ENCODE measurements at regions of chr20 and their contacts with region 1.

Region 1: DNA sequence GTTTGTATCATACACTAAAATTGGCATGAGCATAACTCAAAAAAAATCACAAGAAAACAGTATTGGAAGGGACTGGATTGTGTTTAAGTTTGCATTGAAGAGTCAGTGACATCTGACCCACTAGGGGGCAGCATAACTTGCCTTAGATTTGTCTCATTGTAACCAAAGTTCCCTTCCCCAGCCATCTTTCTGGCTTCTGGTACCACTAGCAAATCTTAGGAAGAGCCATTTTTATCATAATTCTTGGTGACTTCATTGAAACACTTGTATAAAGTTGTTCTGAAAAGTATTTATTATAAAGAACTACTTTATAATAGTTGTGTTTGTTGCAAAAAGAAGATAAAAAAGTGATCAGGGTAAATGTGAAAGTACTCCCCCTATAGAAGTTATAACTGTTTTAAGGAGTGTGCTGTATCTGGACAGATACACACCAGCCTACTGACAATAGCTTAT is 7.7 kb downstream of the CSTF1 start:
- DNase-seq: peak in 8 of 9 donors; percentile 43 to 78 (median 72)
- ATAC-seq: peak; percentile 91
- H3K4me3 ChIP-seq: no peak overlapping the region
- H3K4me3 Mint-ChIP-seq: peak overlapping the region in 3 of 10 donors; percentile 28 to 35 (median 32)
- H3K27ac ChIP-seq: peak overlapping the region; percentile 31
- H3K27ac Mint-ChIP-seq: peak overlapping the region in 8 of 9 donors; percentile 32 to 78 (median 66)
- H3K4me1 ChIP-seq: peaks cover 5 to 6% of the 10 kb centered on the region in 2 donors
- H3K4me1 Mint-ChIP-seq: peaks cover 10 to 42% (median 27%) of the 10 kb centered on the region in 7 donors
- H3K27me3 ChIP-seq: no peaks in the 10 kb centered on the region
- H3K27me3 Mint-ChIP-seq: no peaks in the 10 kb centered on the region

Region 2: DNA sequence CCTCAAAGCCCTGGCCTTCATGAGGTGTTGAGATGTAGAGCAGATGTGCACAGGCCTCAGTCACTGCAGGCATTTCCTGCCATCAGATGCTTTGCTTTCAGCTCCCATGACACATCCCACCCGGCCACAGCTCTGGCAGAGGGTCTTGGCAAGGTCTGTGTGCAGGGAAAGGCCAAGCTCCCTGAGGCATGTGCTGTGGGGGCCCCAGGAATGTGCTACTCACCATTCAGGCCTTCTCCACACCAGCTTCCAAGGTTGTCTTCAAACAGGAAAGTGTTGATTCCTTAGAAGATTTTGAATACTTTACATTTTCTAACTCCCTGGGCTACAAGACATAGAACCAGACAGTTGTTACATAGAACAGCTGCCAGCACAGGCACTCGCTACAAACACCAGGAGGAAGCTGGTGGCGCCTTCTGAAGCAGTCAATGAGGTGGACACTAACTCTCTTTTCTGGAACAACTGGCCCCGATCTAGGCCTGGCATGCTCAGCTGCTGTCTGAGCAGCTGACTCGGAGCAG is 39.7 kb after region 1 on chr20:
- CTCF ChIA-PET with region 1: interaction called, 3 read pairs
- POLR2A ChIA-PET with region 1: interaction called, 5 read pairs
- intact Hi-C with region 1: loop called in 1 of 2 experiments (anchors 2 kb)
- DNase-seq: no peak
- ATAC-seq: peak; percentile 21
- H3K4me3 ChIP-seq: no peak overlapping the region
- H3K4me3 Mint-ChIP-seq: peak overlapping the region in 9 of 10 donors; percentile 64 to 82 (median 74)
- H3K27ac ChIP-seq: peak overlapping the region; percentile 59
- H3K27ac Mint-ChIP-seq: peak overlapping the region; percentile 81 to 95 (median 91)
- H3K4me1 ChIP-seq: peaks cover 36 to 43% of the 10 kb centered on the region in 2 donors
- H3K4me1 Mint-ChIP-seq: peaks cover 29 to 70% (median 51%) of the 10 kb centered on the region in 7 donors
- H3K27me3 ChIP-seq: no peaks in the 10 kb centered on the region
- H3K27me3 Mint-ChIP-seq: no peaks in the 10 kb centered on the region

Region 3: GRCh38 chr20:56483944-56484343 is 83.8 kb after region 1 on chr20:
- CTCF ChIA-PET with region 1: interaction called, 4 read pairs
- POLR2A ChIA-PET with region 1: no interaction called
- intact Hi-C with region 1: loop called in 1 of 2 experiments (anchors 1 kb)
- DNase-seq: peak in 7 of 9 donors; percentile 14 to 57 (median 43)
- ATAC-seq: peak; percentile 61
- H3K4me3 ChIP-seq: peak overlapping the region; percentile 33
- H3K4me3 Mint-ChIP-seq: peak overlapping the region; percentile 64 to 93 (median 83)
- H3K27ac ChIP-seq: peak overlapping the region; percentile 69
- H3K27ac Mint-ChIP-seq: peak overlapping the region; percentile 76 to 95 (median 92)
- H3K4me1 ChIP-seq: peaks cover 0 to 18% of the 10 kb centered on the region in 2 donors
- H3K4me1 Mint-ChIP-seq: peaks cover 25 to 74% (median 54%) of the 10 kb centered on the region in 7 donors
- H3K27me3 ChIP-seq: no peaks in the 10 kb centered on the region
- H3K27me3 Mint-ChIP-seq: no peaks in the 10 kb centered on the region

Region 4: DNA sequence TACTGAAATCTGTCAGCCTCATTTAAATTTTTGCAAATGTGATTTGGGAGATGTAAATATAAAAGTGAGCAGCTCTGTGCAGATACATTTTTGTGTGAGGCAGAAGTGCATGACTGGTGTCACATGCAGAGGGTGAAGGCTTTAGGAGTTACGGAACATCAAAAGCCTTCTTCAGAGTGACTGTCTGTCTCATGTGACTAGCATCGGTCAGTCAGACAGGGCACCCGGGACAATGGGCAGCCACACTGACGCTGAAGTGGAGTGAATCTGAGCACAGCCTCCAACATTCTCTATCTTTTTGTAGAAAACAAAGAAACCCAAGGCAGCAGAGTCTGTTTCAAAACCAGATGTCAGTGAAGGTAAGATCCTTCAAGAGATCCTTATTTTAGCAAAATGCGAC is 116.5 kb after region 1 on chr20:
- CTCF ChIA-PET with region 1: no interaction called
- POLR2A ChIA-PET with region 1: no interaction called
- intact Hi-C with region 1: loop called (anchors 1 kb)
- DNase-seq: no peak
- ATAC-seq: no peak
- H3K4me3 ChIP-seq: no peak overlapping the region
- H3K4me3 Mint-ChIP-seq: no peak overlapping the region
- H3K27ac ChIP-seq: no peak overlapping the region
- H3K27ac Mint-ChIP-seq: no peak overlapping the region
- H3K4me1 ChIP-seq: no peaks in the 10 kb centered on the region
- H3K4me1 Mint-ChIP-seq: peaks cover 0 to 10% (median 0%) of the 10 kb centered on the region in 7 donors
- H3K27me3 ChIP-seq: no peaks in the 10 kb centered on the region
- H3K27me3 Mint-ChIP-seq: no peaks in the 10 kb centered on the region